GM12878 (cell line): ENCODE measurements at regions of chr6 and their contacts with region 1.

Region 1: GRCh38 chr6:11353921-11354389 is 121.5 kb upstream of the NEDD9 start:
- DNase-seq: no peak
- ATAC-seq: peak; percentile 85
- H3K4me3 ChIP-seq: no peak overlapping the region
- H3K27ac ChIP-seq: peak overlapping the region; percentile 43
- H3K4me1 ChIP-seq: peaks cover 13% of the 10 kb centered on the region
- H3K27me3 ChIP-seq: no peaks in the 10 kb centered on the region
- CTCF ChIP-seq: no peak
- EP300 ChIP-seq: no peak
- POLR2A ChIP-seq: no peak
- RAD21 ChIP-seq: no peak

Region 2: GRCh38 chr6:11330413-11330760 is 23.6 kb before region 1 on chr6:
- CTCF ChIA-PET with region 1: interaction called, 3 read pairs
- POLR2A ChIA-PET with region 1: interaction called, 4 read pairs
- RAD21 ChIA-PET with region 1: interaction called, 3 read pairs
- SMC1A ChIA-PET with region 1: interaction called, 66 read pairs
- in situ Hi-C with region 1: no loop called
- intact Hi-C with region 1: no loop called
- DNase-seq: no peak
- ATAC-seq: peak; percentile 35; the same call in 2 of the 3 replicates
- H3K4me3 ChIP-seq: no peak overlapping the region
- H3K27ac ChIP-seq: peak overlapping the region; percentile 58
- H3K4me1 ChIP-seq: peaks cover 35% of the 10 kb centered on the region
- H3K27me3 ChIP-seq: no peaks in the 10 kb centered on the region
- CTCF ChIP-seq: no peak
- EP300 ChIP-seq: no peak
- POLR2A ChIP-seq: no peak
- RAD21 ChIP-seq: no peak

Region 3: GRCh38 chr6:11374036-11375010 is 20.4 kb after region 1 on chr6:
- CTCF ChIA-PET with region 1: interaction called, 3 read pairs
- POLR2A ChIA-PET with region 1: interaction called, 3 read pairs
- RAD21 ChIA-PET with region 1: interaction called, 221 read pairs
- SMC1A ChIA-PET with region 1: interaction called, 275 read pairs
- in situ Hi-C with region 1: no loop called
- intact Hi-C with region 1: no loop called
- DNase-seq: peak; percentile 96
- ATAC-seq: peak; percentile 85
- H3K4me3 ChIP-seq: 0 out of 2 replicates have a peak overlapping the region, but pooled peaks have one; percentile 44
- H3K27ac ChIP-seq: peak overlapping the region; percentile 89
- H3K4me1 ChIP-seq: peaks cover 44% of the 10 kb centered on the region
- H3K27me3 ChIP-seq: no peaks in the 10 kb centered on the region
- CTCF ChIP-seq: no peak
- EP300 ChIP-seq: peak; percentile 83 to 95
- POLR2A ChIP-seq: peak; percentile 43; the same call in 1 of the 2 replicates
- RAD21 ChIP-seq: peak; percentile 25